ENCODE measurements at regions of chr1 and their contacts with region 1.

Region 1: DNA sequence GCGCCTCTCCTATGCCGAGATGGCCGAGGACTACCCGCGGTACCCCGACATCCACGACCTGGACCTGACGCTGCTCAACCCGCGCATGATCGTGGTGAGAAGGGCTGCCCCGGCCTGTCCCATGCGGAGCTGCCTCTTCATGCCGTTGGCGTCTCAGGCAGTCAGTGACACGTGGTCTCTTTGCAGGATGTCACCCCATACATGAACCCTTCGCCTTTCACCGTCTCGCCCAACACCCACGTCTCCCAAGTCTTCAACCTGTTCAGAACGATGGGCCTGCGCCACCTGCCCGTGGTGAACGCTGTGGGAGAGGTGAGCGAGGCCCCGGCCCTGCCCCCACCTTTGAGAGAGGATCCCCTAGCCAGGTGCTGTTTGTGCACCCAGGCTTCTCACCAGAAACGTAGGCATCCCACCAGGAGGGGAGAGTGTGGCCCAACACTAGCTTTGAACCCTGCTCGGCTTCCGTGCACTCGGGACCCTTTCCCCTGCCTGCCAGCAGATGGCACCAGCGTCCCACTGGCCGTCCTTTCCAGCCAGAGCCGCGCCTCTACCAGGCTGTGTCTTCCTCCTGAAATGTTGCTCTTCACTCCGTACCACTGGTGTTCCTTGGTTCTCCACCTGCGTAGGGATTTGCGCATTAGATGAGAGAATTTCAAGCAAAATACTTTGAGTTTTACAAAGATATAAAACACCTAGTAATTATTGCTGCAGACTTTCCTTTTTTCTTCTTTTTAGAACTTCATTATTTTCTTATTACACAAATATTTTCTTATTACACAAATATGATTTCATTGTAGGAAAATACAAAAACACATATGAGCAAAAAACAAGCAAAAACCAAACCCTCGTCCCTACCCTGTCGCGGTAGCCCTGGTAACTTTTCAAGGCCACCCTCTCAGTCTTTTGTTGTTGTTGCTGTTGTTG is 9.0 kb downstream of the NPPA start:
- DNase-seq: peak; percentile 67 to 89 (median 76)
- ATAC-seq: peak; percentile 46 to 80 (median 72)
- H3K4me3 ChIP-seq: no peak overlapping the region
- H3K27ac ChIP-seq: peak overlapping the region in 2 of 12 donors; percentile 57 to 68
- H3K4me1 ChIP-seq: peaks cover 0 to 37% (median 17%) of the 10 kb centered on the region in 12 donors
- H3K27me3 ChIP-seq: no peaks in the 10 kb centered on the region
- CTCF ChIP-seq: peak; percentile 95 to 100 (median 98)
- POLR2A ChIP-seq: no peak

Region 2: GRCh38 chr1:11873395-11874257 is 35.0 kb after region 1 on chr1:
- intact Hi-C with region 1: loop called in 1 of 10 experiments (anchors 1 kb)
- DNase-seq: no peak
- ATAC-seq: no peak
- H3K4me3 ChIP-seq: no peak overlapping the region
- H3K27ac ChIP-seq: peak overlapping the region in 11 of 12 donors; percentile 63 to 95 (median 81)
- H3K4me1 ChIP-seq: peaks cover 0 to 40% (median 20%) of the 10 kb centered on the region in 12 donors
- H3K27me3 ChIP-seq: no peaks in the 10 kb centered on the region
- CTCF ChIP-seq: no peak
- POLR2A ChIP-seq: peak in 1 of 2 donors; percentile 26

Region 3: DNA sequence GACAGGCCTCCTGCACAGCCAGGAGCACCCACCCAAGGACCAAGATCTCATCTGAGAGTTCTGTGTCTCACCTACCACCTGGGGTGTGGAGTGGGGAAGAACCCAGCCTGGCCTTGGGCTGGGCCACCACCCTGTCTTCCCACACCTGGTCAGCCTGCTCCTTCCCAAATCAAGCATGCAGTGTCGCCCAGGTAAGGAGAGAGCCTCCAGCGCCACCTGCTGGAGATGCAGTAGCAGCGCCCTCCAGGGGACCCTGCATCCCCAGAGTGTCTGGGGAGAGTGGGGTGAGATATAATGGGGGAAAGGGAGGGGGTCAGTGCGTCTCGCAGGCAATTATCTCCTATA is 55.3 kb after region 1 on chr1:
- intact Hi-C with region 1: loop called (anchors 1 to 2 kb)
- DNase-seq: peak; percentile 72 to 85 (median 74)
- ATAC-seq: peak; percentile 81 to 94 (median 90)
- H3K4me3 ChIP-seq: no peak overlapping the region
- H3K27ac ChIP-seq: no peak overlapping the region
- H3K4me1 ChIP-seq: peaks cover 0 to 8% (median 0%) of the 10 kb centered on the region in 12 donors
- H3K27me3 ChIP-seq: peaks cover 2 to 37% (median 14%) of the 10 kb centered on the region in 9 donors
- CTCF ChIP-seq: peak; percentile 84 to 94 (median 88)
- POLR2A ChIP-seq: no peak

Region 4: GRCh38 chr1:11967028-11967547 is 128.5 kb after region 1 on chr1:
- intact Hi-C with region 1: loop called in 9 of 10 experiments (anchors 2 to 10 kb)
- DNase-seq: no peak
- ATAC-seq: peak; percentile 27 to 80 (median 69)
- H3K4me3 ChIP-seq: no peak overlapping the region
- H3K27ac ChIP-seq: no peak overlapping the region
- H3K4me1 ChIP-seq: no peaks in the 10 kb centered on the region
- H3K27me3 ChIP-seq: no peaks in the 10 kb centered on the region
- CTCF ChIP-seq: peak in 11 of 12 donors; percentile 28 to 64 (median 47)
- POLR2A ChIP-seq: no peak

Region 5: DNA sequence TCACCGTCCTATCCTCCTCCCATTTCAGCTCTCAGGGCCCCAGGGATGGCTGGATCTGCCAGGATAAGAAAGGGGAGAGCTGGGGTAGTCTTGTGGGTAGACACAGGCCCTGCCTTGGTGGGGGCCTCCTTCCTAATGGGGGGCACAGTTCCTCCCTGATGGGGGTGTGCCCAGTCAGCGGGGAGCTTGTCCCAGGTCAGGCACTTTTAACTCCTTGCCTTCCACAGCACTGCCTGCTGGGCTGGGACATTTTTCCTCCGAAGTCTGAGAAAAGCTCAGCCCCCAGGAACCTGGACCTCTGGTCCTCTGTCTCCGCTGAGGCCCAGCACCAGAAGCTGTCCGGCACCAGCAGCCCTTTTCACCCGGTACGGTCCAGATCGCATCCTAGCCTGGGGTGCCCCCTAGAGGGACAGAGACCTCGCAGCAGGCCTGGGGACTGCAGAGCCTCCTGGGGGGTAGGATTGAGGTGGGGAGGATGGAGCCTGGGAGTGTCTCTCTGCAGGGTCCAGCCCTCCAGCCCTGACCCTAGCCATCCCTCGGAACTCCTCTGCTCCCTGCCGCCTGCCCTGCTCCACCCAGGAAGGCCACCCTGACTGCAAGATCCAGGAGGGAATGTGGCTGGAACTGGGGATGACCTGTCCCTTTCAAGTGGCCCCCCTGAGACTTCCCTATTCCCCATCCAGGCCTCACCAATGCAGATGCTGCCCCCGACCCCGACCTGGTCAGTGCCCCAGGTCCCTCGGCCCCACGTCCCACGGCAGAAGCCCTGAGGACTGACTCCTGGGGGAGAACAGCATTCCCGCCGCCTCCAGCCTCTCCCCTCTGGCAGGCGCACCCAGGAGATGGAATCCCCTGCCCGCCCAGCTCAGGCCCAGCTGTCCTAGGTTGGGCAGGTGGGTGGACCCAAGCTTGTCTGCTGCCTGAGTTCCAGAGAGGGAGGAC is 192.7 kb after region 1 on chr1:
- intact Hi-C with region 1: loop called in 2 of 10 experiments (anchors 5 kb)
- DNase-seq: peak in 3 of 5 donors; percentile 37 to 68 (median 48)
- ATAC-seq: peak; percentile 57 to 82 (median 72)
- H3K4me3 ChIP-seq: no peak overlapping the region
- H3K27ac ChIP-seq: no peak overlapping the region
- H3K4me1 ChIP-seq: peaks cover 0 to 6% (median 0%) of the 10 kb centered on the region in 12 donors
- H3K27me3 ChIP-seq: no peaks in the 10 kb centered on the region
- CTCF ChIP-seq: peak; percentile 39 to 65 (median 55)
- POLR2A ChIP-seq: no peak

Measured in heart left ventricle (tissue), 16 donors.